ENCODE measurements at regions of chr5 and their contacts with region 1.

Region 1: DNA sequence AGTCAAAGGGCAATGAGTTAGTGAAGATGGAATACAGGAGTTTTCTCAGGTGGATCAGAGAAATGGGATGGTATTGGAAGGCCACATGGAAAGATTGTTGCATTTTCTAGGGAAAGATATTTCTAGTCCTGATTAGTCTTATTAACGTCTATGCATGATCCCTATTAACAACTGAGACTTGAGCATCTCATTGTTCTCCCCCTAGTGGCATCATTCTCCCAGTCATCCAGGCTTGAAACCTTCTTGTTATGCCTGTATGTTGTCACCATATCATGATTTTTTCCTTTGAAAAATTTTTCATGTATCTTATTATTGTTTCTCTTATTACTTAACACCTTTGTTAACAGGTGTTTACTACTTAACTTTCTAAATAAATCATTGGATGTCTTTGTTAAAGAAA is 34.4 kb downstream of the KIF2A start:
- DNase-seq: no peak
- ATAC-seq: no peak
- H3K4me3 Mint-ChIP-seq: no peak overlapping the region
- H3K27ac Mint-ChIP-seq: no peak overlapping the region
- H3K4me1 Mint-ChIP-seq: peaks cover 54% of the 10 kb centered on the region
- H3K27me3 Mint-ChIP-seq: no peaks in the 10 kb centered on the region

Region 2: DNA sequence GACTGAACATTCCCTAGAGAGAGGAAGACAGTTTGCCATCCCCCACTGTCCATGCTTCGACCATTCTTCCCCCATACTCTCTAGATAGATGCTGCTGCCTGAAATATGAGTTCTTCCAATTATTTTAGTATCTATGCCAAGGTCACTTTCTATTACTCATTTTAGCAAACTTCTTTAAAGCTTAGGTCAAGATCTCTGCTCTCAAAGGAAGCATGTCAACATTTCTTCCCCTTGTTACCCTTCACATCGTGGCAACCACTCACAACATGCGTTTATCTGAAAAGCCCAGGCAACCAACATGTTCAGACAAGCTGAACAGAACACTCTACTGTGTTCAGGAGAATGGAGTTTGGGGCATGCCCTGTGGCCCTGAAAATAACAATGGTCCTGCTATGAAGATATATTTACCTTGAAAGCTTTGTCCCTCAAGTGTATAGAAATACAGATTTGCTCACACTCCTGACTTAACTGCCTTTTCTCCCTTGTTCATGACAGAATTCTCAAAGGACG is 172.8 kb before region 1 on chr5:
- CTCF ChIA-PET with region 1: no interaction called
- POLR2A ChIA-PET with region 1: no interaction called
- intact Hi-C with region 1: no loop called
- DNase-seq: no peak
- ATAC-seq: no peak
- H3K4me3 Mint-ChIP-seq: no peak overlapping the region
- H3K27ac Mint-ChIP-seq: no peak overlapping the region
- H3K4me1 Mint-ChIP-seq: no peaks in the 10 kb centered on the region
- H3K27me3 Mint-ChIP-seq: peaks cover 19% of the 10 kb centered on the region

Region 3: DNA sequence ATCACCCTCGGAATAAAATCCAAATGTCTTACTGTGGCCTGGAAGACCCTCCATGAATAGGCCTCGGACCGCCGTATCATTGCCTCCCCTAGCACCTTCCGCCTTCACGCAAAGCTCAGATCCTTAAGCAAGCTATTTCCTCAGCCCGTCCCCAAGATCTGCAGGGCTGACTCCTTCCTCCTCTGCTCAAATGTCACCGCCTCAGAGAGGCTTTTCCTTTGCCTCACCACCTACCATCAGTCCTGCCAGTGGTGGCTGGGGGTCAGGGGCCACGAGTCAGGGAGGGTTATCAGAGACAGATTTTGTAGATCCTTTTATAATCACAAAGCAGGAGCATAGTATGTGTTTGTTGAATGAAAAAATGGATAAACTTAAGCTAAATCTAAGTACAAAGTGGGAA is 108.8 kb before region 1 on chr5:
- CTCF ChIA-PET with region 1: no interaction called
- POLR2A ChIA-PET with region 1: no interaction called
- intact Hi-C with region 1: loop called (anchors 5 kb)
- DNase-seq: no peak
- ATAC-seq: no peak
- H3K4me3 Mint-ChIP-seq: no peak overlapping the region
- H3K27ac Mint-ChIP-seq: no peak overlapping the region
- H3K4me1 Mint-ChIP-seq: peaks cover 18% of the 10 kb centered on the region
- H3K27me3 Mint-ChIP-seq: no peaks in the 10 kb centered on the region

Region 4: DNA sequence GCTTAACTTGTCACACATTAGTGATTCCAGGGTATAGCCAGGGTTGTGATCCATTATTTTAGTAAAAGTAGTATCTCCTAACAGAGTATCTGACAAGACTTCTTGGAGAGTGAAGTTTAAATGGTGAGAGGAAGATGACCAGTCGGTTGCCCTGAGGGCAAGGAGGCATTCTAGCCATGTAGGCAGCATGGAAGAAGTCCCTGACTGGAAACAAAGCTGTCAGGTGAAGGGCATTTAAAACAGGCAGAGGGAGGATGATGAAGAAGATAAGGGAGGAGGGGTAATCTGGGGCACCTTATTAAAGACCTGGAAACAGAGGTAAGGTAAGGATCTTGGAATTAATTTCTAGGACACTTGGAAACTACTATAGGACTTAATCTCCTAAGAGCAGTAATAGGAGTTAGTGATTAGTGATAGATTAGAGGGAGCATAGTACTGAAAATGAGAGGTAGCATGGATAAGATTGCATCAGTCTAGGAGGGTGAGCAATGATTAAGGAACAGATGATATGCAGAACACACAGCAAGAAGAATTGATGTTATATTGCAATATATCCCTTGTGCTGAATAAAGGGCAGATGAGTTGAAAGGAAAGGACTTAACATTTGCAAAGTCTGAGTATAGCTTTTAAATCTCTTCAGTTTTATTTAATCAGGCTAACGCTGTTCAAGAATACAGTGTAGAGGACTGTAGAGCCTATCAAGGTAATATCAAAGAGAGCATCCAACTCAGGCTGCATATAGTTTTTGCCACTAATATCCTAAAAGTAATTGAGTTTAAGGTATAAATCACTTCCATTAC is 24.8 kb before region 1 on chr5:
- CTCF ChIA-PET with region 1: interaction called, 3 read pairs
- POLR2A ChIA-PET with region 1: interaction called, 4 read pairs
- intact Hi-C with region 1: loop called in 1 of 2 experiments (anchors 2 kb)
- DNase-seq: no peak
- ATAC-seq: no peak
- H3K4me3 Mint-ChIP-seq: no peak overlapping the region
- H3K27ac Mint-ChIP-seq: peak overlapping the region; percentile 81
- H3K4me1 Mint-ChIP-seq: peaks cover 85% of the 10 kb centered on the region
- H3K27me3 Mint-ChIP-seq: no peaks in the 10 kb centered on the region

Region 5: GRCh38 chr5:62457071-62457470 is 116.7 kb after region 1 on chr5:
- CTCF ChIA-PET with region 1: no interaction called
- POLR2A ChIA-PET with region 1: no interaction called
- intact Hi-C with region 1: no loop called
- DNase-seq: no peak
- ATAC-seq: no peak
- H3K4me3 Mint-ChIP-seq: no peak overlapping the region
- H3K27ac Mint-ChIP-seq: no peak overlapping the region
- H3K4me1 Mint-ChIP-seq: no peaks in the 10 kb centered on the region
- H3K27me3 Mint-ChIP-seq: no peaks in the 10 kb centered on the region

Region 6: GRCh38 chr5:62514510-62515119 is 174.2 kb after region 1 on chr5:
- CTCF ChIA-PET with region 1: no interaction called
- POLR2A ChIA-PET with region 1: no interaction called
- intact Hi-C with region 1: no loop called
- DNase-seq: no peak
- ATAC-seq: no peak
- H3K4me3 Mint-ChIP-seq: no peak overlapping the region
- H3K27ac Mint-ChIP-seq: no peak overlapping the region
- H3K4me1 Mint-ChIP-seq: no peaks in the 10 kb centered on the region
- H3K27me3 Mint-ChIP-seq: no peaks in the 10 kb centered on the region

Measured in activated CD4-positive, alpha-beta T cell treated with anti-CD3 and anti-CD28 coated beads for 36 hours (primary cell).